Activated T-helper 1 cell treated with anti-CD3 and anti-CD28 coated beads, Interleukin-12 subunit alpha, Interleukin-12 subunit beta, Interleukin-2, Interleukin-4 antibody, amounts not matched to agents 30 ng/mL and 10 ng/mL and 1 ng/mL, durations not matched to agents 14 hours and 24 hours and 36 hours (primary cell): ENCODE measurements at regions of chr2 and their contacts with region 1.

Region 1: DNA sequence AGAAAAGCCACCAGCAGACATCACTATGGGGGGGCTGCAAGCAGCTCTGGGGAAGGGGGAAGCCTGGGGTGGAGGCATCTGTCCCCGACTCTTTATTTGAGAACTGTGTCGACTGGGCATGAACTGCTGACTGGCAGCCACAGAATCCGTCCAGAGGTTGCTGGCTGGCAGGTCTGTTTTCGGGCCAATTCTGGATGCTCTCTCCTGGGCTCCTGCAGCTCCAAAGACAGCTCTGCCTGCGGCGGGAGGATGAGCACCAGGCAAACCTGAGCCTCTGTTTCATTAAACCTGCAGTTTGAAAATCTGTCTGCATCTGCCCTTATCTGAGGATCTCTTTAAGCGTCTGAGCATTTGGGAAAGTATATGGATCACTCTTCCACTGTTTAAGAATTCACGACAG is 34.4 kb upstream of the RPL31 start:
- DNase-seq: no peak
- H3K4me3 Mint-ChIP-seq: no peak overlapping the region
- H3K27ac Mint-ChIP-seq: no peak overlapping the region
- H3K4me1 Mint-ChIP-seq: no peaks in the 10 kb centered on the region
- H3K27me3 Mint-ChIP-seq: no peaks in the 10 kb centered on the region

Region 2: DNA sequence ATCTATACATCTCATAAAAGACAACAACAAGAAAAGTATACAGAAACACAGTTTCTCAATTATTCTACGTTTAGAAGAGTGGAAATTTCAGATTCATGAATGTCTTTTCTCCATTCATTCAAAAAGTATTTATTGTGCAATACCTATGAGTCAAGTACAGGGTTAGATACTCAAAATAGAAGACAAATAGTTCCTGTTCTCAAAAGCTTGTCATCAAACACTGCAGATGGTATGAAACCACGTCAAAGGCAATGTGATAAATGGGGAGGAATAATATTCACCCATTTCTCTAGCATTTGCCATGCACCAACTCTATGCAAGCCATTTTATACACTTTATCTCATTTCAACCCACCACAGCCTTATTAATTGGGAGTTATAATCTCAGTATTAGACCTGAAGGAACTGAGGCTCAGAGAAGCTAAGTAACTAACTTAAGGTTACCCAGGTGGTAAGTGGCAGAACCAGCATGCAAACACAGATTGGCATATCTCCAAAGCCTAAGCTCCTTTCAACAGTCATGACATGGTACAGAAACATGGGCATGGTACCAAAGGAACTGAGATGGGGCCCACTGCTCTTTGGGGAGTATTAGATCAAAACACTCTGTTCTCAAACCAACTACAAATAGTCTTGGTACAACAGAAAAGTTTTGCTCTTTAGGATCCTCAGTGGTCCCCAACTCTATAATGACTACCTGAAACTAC is 214.9 kb before region 1 on chr2:
- intact Hi-C with region 1: no loop called
- DNase-seq: no peak
- H3K4me3 Mint-ChIP-seq: no peak overlapping the region
- H3K27ac Mint-ChIP-seq: no peak overlapping the region
- H3K4me1 Mint-ChIP-seq: peaks cover 4% of the 10 kb centered on the region
- H3K27me3 Mint-ChIP-seq: peaks cover 7% of the 10 kb centered on the region

Region 3: GRCh38 chr2:100955226-100955625 is 12.5 kb before region 1 on chr2:
- intact Hi-C with region 1: loop called (anchors 1 kb)
- DNase-seq: no peak
- H3K4me3 Mint-ChIP-seq: no peak overlapping the region
- H3K27ac Mint-ChIP-seq: no peak overlapping the region
- H3K4me1 Mint-ChIP-seq: peaks cover 10% of the 10 kb centered on the region
- H3K27me3 Mint-ChIP-seq: no peaks in the 10 kb centered on the region

Region 4: DNA sequence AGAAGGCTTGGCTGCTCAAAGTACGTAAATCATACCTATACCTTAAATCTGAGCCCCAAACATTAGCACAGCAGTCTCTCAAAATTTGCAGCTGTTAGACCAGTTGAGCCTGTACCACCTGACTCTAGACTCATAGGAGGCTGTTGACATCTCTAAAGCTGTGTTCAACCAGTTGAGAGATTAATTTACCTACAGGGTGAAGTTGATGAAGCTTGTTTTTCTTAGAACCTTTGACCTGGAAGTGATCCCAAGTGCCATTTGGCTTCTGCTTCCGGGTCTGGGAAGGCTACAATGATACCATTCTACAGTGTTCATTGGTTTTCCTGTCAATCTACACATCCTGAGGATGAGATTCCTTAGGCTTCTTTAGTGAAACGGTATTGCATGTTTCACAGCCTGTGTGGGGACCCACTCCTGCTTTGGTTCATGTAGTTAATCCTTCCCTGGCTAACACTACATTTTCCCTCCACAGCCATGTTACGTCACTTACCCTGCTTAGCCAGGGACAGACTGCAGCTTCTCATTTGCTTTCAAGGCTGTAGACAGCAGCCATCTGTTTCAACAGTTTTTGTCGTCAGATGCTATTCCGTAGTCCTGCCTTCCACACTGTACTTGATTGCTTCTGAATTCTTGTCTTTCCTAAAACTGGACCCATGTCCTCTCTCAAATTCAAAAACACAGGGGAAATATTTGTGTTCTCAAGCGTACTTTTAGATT is 1214.4 kb after region 1 on chr2:
- intact Hi-C with region 1: no loop called
- DNase-seq: no peak
- H3K4me3 Mint-ChIP-seq: no peak overlapping the region
- H3K27ac Mint-ChIP-seq: no peak overlapping the region
- H3K4me1 Mint-ChIP-seq: peaks cover 13% of the 10 kb centered on the region
- H3K27me3 Mint-ChIP-seq: peaks cover 26% of the 10 kb centered on the region